HCT116 (cell line): ENCODE measurements at regions of chr11 and their contacts with region 1.

Region 1: DNA sequence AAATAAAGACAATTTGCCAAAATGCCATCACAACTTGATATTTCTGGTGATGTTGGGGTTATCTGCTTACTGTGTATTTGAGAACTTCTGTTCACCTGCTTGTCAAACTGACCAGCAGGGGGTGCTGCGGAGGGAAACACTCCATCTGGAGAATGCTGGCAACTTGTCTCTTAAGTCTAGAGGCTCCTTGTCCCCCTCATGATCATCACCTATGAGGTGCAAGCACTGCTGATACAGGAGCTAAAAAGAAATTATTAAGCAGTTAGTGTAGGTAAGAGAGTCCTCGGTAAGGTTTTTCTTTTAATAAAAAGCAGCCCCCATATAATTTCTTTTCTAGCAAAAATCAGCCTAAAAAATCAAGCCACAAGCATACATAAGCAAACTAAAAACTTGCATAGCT is 32.7 kb upstream of the GLYATL1B start:
- DNase-seq: peak; percentile 40
- ATAC-seq: peak; percentile 74
- H3K4me3 ChIP-seq: no peak overlapping the region
- H3K27ac ChIP-seq: no peak overlapping the region
- H3K4me1 ChIP-seq: peaks cover 0 to 5% of the 10 kb centered on the region in 2 experiments; a peak in 2 of 4 replicates
- H3K27me3 ChIP-seq: 0 out of 2 replicates have a peak, but pooled peaks cover 4% of the 10 kb centered on the region
- CTCF ChIP-seq: peak; percentile 24 to 76 (median 75); a peak in 5 of 6 replicates
- POLR2A ChIP-seq: no peak
- RAD21 ChIP-seq: peak; percentile 22; the same call in 1 of the 2 replicates

Region 2: DNA sequence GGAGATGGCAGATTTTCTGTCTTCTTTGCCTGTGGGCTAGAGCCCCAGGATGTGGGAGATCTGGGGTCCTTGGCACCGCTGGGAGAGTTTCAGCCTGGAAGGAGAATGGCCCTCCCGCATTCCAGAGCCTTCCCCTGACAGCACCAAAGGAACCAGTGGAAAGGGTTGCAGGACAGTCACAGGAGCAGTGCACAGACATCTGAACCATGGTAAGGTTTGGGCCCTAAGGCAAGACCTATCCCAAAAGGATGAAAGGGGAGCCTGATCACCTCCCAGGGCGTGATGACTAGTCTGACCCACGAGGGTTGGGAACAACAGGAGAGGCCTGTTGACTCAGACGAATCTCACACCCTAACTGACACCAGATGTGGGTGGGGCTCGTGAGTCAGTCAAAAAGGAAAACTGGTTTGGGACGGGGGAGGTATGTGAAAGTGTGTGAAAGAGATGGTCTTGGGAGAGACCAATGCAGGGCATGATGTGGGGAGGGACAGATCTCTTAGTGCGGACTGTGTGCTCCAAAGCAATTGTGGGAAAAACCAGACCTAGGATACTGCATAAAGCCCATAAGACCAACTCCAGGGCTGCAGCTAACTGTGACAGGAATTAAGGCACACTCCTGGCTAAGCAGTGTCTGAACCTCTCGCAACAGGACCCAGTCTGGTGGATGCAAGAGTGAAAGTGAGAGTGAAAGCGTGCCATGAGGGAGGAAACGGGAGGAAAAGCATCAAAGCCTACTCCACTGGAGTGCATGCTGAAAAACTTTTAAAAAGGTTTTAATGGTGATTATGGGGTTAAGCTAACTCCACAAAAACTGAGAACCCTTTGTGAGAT is 282.5 kb before region 1 on chr11:
- CTCF ChIA-PET with region 1: no interaction called
- POLR2A ChIA-PET with region 1: no interaction called
- RAD21 ChIA-PET with region 1: no interaction called
- intact Hi-C with region 1: no loop called
- DNase-seq: peak; percentile 67
- ATAC-seq: peak; percentile 87
- H3K4me3 ChIP-seq: 0 out of 4 replicates have a peak overlapping the region, but pooled peaks of 1 of the 2 experiments have one; percentile 30
- H3K27ac ChIP-seq: no peak overlapping the region
- H3K4me1 ChIP-seq: peaks cover 7 to 22% of the 10 kb centered on the region in 2 experiments
- H3K27me3 ChIP-seq: no peaks in the 10 kb centered on the region
- CTCF ChIP-seq: no peak
- POLR2A ChIP-seq: no peak
- RAD21 ChIP-seq: no peak

Region 3: GRCh38 chr11:58900479-58901420 is 152.6 kb before region 1 on chr11:
- CTCF ChIA-PET with region 1: interaction called, 11 read pairs
- POLR2A ChIA-PET with region 1: no interaction called
- RAD21 ChIA-PET with region 1: no interaction called
- intact Hi-C with region 1: loop called (anchors 5 kb)
- DNase-seq: peak; percentile 80
- ATAC-seq: peak; percentile 99
- H3K4me3 ChIP-seq: no peak overlapping the region
- H3K27ac ChIP-seq: no peak overlapping the region
- H3K4me1 ChIP-seq: no peaks in the 10 kb centered on the region
- H3K27me3 ChIP-seq: no peaks in the 10 kb centered on the region
- CTCF ChIP-seq: peak; percentile 71 to 79 (median 78); a peak in 5 of 6 replicates
- POLR2A ChIP-seq: no peak
- RAD21 ChIP-seq: peak; percentile 83

Region 4: DNA sequence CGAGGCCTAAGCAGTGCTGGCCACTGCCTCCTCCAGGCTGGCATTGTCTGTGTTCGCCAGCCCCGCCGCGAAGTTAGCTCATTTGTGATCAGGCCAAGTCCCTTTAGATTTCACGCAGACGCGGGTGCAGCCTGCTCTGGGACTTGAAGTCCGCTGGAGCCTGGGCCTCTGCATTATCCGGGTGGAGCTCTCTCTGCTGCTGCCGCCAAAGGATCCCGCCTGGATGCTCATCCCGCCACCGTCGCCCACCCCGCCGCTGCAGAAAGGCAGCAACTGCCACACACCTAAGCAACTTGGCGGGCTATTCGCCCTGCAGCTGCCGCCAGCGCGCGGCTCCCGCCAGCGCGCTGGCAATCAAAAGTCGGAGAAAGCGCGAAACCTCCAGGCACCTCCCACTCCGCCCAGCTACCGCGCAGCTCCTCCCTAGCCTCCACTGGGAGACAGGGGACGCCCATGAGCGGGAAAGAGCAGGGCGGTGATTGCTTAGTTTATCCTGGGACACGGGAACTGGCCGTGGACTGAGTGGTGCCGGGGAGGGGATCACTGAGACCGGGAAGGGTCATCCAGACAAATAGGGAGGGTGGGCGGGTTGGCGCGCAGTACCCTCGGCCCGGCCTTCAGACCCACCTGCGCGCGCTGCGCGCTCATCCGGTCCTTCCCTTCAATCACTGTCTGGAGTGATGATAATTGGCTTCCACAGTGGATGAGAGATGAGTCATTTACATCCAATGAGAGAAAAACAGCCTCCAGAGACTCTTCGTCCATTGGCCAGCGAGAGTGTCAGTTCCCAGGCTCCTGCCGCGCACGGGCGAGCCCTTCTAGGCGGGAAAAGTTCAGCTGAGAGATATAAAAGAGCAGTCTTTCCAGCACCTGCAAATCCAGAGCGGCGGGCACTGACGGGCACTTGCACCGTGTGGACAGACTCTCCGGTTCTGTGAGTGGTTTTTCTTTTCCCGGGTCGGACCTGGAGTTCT is 53.3 kb after region 1 on chr11 and contains the start of gene FAM111B:
- CTCF ChIA-PET with region 1: interaction called, 3 read pairs
- POLR2A ChIA-PET with region 1: no interaction called
- RAD21 ChIA-PET with region 1: no interaction called
- intact Hi-C with region 1: loop called (anchors 2 kb)
- DNase-seq: peak; percentile 83
- ATAC-seq: peak; percentile 94
- H3K4me3 ChIP-seq: peak within 1 kb of the TSS; percentile 54 to 62
- H3K27ac ChIP-seq: peak within 1 kb of the TSS; percentile 43; the same call in 1 of the 2 replicates
- H3K4me1 ChIP-seq: peaks cover 0 to 23% of the 10 kb centered on the region in 2 experiments; a peak in 3 of 4 replicates
- H3K27me3 ChIP-seq: no peaks in the 10 kb centered on the region
- CTCF ChIP-seq: no peak
- POLR2A ChIP-seq: no peak
- RAD21 ChIP-seq: no peak
- total RNA-seq, gene FAM111B: 10.7 TPM